B cell (primary cell): ENCODE measurements at regions of chr1 and their contacts with region 1.

Region 1: DNA sequence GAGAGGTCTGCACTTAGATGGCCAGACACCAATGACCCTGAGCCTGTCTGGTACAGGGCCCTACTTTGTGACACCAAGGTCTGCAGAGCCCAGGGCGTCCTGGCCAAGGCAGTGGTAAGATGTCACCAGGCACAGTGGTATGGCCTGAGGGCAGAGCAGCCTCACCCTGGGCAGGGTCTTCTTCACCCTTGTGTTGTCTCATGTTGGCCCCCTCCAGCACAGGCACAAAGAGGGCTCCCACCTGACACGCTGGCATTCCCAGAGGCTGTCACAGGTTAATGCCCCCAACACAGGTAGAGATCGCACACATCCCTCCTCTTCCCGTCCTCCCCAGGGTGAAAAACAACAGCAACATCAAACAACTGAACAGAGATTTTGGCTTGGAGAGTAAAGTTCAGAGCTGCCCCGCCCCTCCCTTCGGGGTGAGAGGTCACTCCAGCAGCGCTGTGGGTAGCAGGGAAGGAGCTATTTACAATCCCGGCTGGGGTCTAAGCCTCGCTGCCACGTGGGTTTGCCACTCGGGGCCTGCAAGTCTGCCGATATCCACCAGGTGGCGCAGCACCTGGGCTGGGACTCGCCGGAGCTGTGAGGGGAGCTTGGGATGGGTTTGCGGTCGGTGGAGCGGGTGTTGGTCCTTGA is 12.6 kb downstream of the EFNA3 start:
- DNase-seq: peak; percentile 86
- ATAC-seq: peak; percentile 91
- H3K4me3 ChIP-seq: no peak overlapping the region
- H3K4me3 Mint-ChIP-seq: no peak overlapping the region
- H3K27ac ChIP-seq: no peak overlapping the region
- H3K27ac Mint-ChIP-seq: no peak overlapping the region
- H3K4me1 ChIP-seq: peaks cover 13 to 17% of the 10 kb centered on the region in 2 donors
- H3K4me1 Mint-ChIP-seq: peaks cover 8% of the 10 kb centered on the region
- H3K27me3 ChIP-seq: peaks cover 0 to 6% (median 1%) of the 10 kb centered on the region in 4 experiments
- H3K27me3 Mint-ChIP-seq: peaks cover 12% of the 10 kb centered on the region
- CTCF ChIP-seq: peak; percentile 97

Region 2: DNA sequence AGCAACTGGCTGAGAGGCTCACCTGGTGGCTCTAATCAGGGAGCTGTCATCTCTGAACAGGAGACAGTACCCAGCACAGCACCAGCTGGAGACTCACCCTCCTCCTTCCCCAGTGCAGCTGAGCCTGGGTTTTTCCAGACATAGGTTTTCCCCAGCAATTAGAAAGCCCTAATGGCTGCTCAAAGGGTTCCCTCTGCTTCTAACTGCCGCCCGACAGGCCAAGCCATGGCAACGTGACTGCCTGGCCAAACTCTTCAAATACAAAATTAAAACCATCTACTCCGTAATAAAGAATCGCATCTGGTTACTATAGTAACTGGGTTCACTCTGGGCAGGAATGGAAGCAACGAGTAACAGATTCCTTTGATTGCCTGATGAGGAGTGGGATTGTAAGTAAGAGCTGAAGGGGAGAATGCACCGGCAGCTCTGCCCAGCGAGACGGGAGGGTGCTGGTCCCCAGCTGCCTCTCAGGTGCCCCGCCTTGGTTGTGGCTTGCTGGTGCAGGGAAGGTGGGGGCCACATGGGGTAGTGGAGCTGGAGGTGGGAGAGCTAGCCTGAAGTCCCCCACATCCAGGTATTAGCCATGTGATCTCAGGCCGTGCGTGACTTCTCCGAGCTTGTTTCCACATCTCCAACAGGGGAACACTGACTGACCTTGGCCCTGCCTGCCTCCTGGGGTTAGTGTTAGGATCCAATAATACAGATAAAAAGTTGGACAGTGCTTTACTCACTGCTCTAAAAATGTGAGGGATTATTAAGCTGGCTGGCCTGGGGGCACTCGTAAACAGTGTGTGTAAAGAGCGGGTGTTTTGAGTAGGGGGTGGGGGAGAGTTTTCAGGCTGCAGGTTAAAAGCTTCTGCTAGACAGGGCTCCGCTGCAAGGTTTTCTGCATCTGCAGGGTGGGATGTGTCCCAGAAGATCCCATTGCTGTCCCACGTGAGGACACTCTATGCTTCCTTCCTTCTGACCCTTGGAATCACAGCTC is 315.3 kb before region 1 on chr1:
- CTCF ChIA-PET with region 1: no interaction called
- POLR2A ChIA-PET with region 1: no interaction called
- intact Hi-C with region 1: no loop called
- DNase-seq: no peak
- ATAC-seq: no peak
- H3K4me3 ChIP-seq: no peak overlapping the region
- H3K4me3 Mint-ChIP-seq: no peak overlapping the region
- H3K27ac ChIP-seq: no peak overlapping the region
- H3K27ac Mint-ChIP-seq: no peak overlapping the region
- H3K4me1 ChIP-seq: no peaks in the 10 kb centered on the region
- H3K4me1 Mint-ChIP-seq: no peaks in the 10 kb centered on the region
- H3K27me3 ChIP-seq: no peaks in the 10 kb centered on the region
- H3K27me3 Mint-ChIP-seq: peaks cover 6% of the 10 kb centered on the region
- CTCF ChIP-seq: no peak

Region 3: GRCh38 chr1:155044812-155045690 is 46.1 kb before region 1 on chr1:
- CTCF ChIA-PET with region 1: interaction called, 77 read pairs
- POLR2A ChIA-PET with region 1: no interaction called
- intact Hi-C with region 1: no loop called
- DNase-seq: peak; percentile 76
- ATAC-seq: peak; percentile 92
- H3K4me3 ChIP-seq: no peak overlapping the region
- H3K4me3 Mint-ChIP-seq: peak overlapping the region; percentile 30
- H3K27ac ChIP-seq: no peak overlapping the region
- H3K27ac Mint-ChIP-seq: peak overlapping the region; percentile 54
- H3K4me1 ChIP-seq: peaks cover 0 to under 1% of the 10 kb centered on the region in 2 donors
- H3K4me1 Mint-ChIP-seq: peaks cover 10% of the 10 kb centered on the region
- H3K27me3 ChIP-seq: no peaks in the 10 kb centered on the region
- H3K27me3 Mint-ChIP-seq: peaks cover 3% of the 10 kb centered on the region
- CTCF ChIP-seq: peak; percentile 63

Region 4: GRCh38 chr1:155105604-155106022 is 14.4 kb after region 1 on chr1:
- CTCF ChIA-PET with region 1: interaction called, 19 read pairs
- POLR2A ChIA-PET with region 1: no interaction called
- intact Hi-C with region 1: no loop called
- DNase-seq: no peak
- ATAC-seq: no peak
- H3K4me3 ChIP-seq: no peak overlapping the region
- H3K4me3 Mint-ChIP-seq: no peak overlapping the region
- H3K27ac ChIP-seq: no peak overlapping the region
- H3K27ac Mint-ChIP-seq: no peak overlapping the region
- H3K4me1 ChIP-seq: no peaks in the 10 kb centered on the region
- H3K4me1 Mint-ChIP-seq: no peaks in the 10 kb centered on the region
- H3K27me3 ChIP-seq: no peaks in the 10 kb centered on the region
- H3K27me3 Mint-ChIP-seq: no peaks in the 10 kb centered on the region
- CTCF ChIP-seq: no peak

Region 5: GRCh38 chr1:155135415-155136028 is 44.3 kb after region 1 on chr1 and contains the start of gene SLC50A1:
- CTCF ChIA-PET with region 1: interaction called, 23 read pairs
- POLR2A ChIA-PET with region 1: interaction called, 3 read pairs
- intact Hi-C with region 1: no loop called
- DNase-seq: peak; percentile 96
- ATAC-seq: peak; percentile 86
- H3K4me3 ChIP-seq: peak within 1 kb of the TSS; percentile 86 to 99 (median 92)
- H3K4me3 Mint-ChIP-seq: peak within 1 kb of the TSS; percentile 100
- H3K27ac ChIP-seq: peak within 1 kb of the TSS; percentile 99 to 100
- H3K27ac Mint-ChIP-seq: peak within 1 kb of the TSS; percentile 98
- H3K4me1 ChIP-seq: peaks cover 22 to 26% of the 10 kb centered on the region in 2 donors
- H3K4me1 Mint-ChIP-seq: peaks cover 46% of the 10 kb centered on the region
- H3K27me3 ChIP-seq: no peaks in the 10 kb centered on the region
- H3K27me3 Mint-ChIP-seq: peaks cover 3% of the 10 kb centered on the region
- CTCF ChIP-seq: no peak
- total RNA-seq, gene SLC50A1: 61.3 and 62.8 TPM in 2 replicates

Region 6: GRCh38 chr1:155167166-155168104 is 76.2 kb after region 1 on chr1:
- CTCF ChIA-PET with region 1: interaction called, 307 read pairs
- POLR2A ChIA-PET with region 1: interaction called, 9 read pairs
- intact Hi-C with region 1: loop called (anchors 1 kb)
- DNase-seq: peak; percentile 91
- ATAC-seq: peak; percentile 81
- H3K4me3 ChIP-seq: peak overlapping the region; percentile 5 to 48 (median 38)
- H3K4me3 Mint-ChIP-seq: peak overlapping the region; percentile 82
- H3K27ac ChIP-seq: peak overlapping the region; percentile 2 to 34
- H3K27ac Mint-ChIP-seq: peak overlapping the region; percentile 83
- H3K4me1 ChIP-seq: peaks cover 17 to 28% of the 10 kb centered on the region in 2 donors
- H3K4me1 Mint-ChIP-seq: peaks cover 27% of the 10 kb centered on the region
- H3K27me3 ChIP-seq: no peaks in the 10 kb centered on the region
- H3K27me3 Mint-ChIP-seq: no peaks in the 10 kb centered on the region
- CTCF ChIP-seq: peak; percentile 90

Region 7: DNA sequence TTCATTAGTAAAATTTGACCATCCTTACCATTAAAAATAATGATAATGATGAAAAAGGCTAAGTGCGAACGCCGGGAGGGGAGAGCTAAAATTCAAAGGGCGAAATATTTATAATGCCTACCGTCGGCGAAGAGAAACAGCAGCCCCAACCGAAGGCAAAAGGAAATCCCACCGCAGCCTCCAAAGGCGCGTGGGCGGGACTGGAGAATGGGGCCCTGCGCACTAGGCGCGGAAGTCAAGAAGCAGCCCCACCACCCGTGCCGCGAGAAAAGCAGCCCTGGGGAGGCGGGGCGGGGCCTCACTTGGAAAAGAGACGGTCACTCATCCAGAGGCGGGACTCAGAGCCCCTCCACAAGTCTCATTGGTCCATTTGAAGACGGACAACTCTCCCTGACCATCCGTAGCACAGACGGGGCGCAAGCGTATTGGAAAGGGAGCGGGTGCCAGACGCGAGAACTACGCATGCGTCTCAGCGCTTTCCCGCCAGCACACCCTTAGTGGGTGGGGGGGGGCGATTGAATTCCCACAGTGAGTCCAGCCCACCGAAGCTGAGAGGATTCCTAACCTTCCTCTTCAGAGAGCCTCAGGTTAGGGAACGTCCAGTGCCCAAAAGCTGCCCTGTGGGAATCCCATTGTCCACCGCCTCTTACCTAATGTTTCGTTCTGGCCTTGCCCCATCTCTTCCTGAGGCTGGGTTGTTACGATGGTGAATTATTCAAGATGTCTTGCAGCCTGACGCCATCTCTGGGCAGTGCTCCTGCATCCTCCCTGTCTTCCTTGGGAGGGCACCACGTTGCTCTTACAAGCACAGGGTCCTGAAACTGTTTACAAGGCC is 136.3 kb after region 1 on chr1:
- CTCF ChIA-PET with region 1: interaction called, 14 read pairs
- POLR2A ChIA-PET with region 1: no interaction called
- intact Hi-C with region 1: no loop called
- DNase-seq: peak; percentile 98
- ATAC-seq: peak; percentile 97
- H3K4me3 ChIP-seq: peak overlapping the region; percentile 61 to 93 (median 68)
- H3K4me3 Mint-ChIP-seq: peak overlapping the region; percentile 85
- H3K27ac ChIP-seq: peak overlapping the region; percentile 70
- H3K27ac Mint-ChIP-seq: peak overlapping the region; percentile 91
- H3K4me1 ChIP-seq: peaks cover 43 to 56% of the 10 kb centered on the region in 2 donors
- H3K4me1 Mint-ChIP-seq: peaks cover 43% of the 10 kb centered on the region
- H3K27me3 ChIP-seq: no peaks in the 10 kb centered on the region
- H3K27me3 Mint-ChIP-seq: no peaks in the 10 kb centered on the region
- CTCF ChIP-seq: no peak